ENCODE measurements at regions of chr14 and their contacts with region 1.

Region 1: DNA sequence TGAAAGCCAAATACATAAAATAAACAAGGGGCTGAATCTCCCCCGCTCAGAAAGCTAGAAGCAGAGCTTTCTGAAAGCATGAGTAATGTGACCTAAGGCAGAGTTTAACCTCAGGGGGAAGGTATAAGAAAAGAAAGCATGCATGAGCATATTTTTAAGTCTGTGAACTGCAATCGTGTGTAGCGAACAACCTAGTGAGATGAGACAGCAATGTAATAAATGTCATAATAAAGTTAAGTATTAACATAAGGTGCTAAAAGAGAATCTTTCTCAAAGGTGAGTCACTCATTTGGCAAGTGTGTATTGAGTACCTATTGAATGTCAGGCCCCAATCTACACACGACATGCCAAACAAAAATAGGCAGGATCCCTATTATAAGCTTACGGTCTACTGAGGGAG is 14.2 kb upstream of the WDR20 start:
- DNase-seq: peak; percentile 25 to 97
- H3K4me3 ChIP-seq: peak overlapping the region; percentile 14
- H3K27ac ChIP-seq: peak overlapping the region; percentile 72
- H3K4me1 ChIP-seq: peaks cover 36% of the 10 kb centered on the region
- H3K27me3 ChIP-seq: no peaks in the 10 kb centered on the region
- CTCF ChIP-seq: no peak

Region 2: DNA sequence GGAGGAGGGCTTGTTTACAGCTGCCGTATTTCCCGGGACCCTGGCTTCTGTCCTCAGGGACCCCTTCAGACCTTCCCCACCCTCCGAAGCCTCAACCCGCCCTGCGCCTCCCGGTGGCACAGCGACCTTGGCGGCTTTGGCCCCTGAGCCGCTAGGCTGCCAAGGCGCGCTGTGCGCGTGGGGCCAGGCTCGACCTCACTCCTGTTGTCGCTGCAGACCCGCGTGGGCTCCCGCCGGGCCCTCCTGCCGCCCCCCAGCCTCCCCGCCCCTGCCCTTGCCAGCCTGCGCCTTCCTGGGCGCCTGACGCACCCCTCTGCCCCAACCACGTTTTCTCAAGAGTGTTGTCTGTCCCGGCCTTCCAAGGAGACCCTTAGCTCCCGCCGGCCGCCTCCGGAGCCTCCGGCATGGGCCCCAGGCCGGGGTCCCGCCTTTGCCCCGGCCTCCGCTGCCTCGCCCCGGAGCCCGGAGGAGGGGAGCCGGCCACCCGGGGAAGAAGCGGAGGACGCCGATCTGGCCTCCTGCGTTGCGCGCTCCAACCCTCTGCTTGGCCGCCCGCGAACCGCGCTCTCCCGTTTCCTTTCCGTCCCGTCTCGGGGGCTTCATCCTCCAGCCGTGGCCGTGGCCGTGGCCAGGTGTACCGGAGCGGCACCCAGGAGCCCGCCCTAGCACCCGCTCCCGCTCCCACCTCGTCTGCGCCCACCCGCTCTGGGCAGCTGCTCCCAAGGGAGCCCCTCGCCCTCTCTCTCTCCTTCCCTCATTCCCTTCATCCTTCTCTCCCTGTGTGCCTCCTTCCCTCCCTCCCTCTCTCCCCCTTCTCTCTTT is 344.1 kb before region 1 on chr14:
- CTCF ChIA-PET with region 1: no interaction called
- POLR2A ChIA-PET with region 1: interaction called, 11 read pairs
- intact Hi-C with region 1: no loop called
- DNase-seq: no peak
- H3K4me3 ChIP-seq: no peak overlapping the region
- H3K27ac ChIP-seq: no peak overlapping the region
- H3K4me1 ChIP-seq: no peaks in the 10 kb centered on the region
- H3K27me3 ChIP-seq: no peaks in the 10 kb centered on the region
- CTCF ChIP-seq: no peak

Region 3: GRCh38 chr14:102105369-102105768 is 20.2 kb before region 1 on chr14:
- CTCF ChIA-PET with region 1: no interaction called
- POLR2A ChIA-PET with region 1: no interaction called
- intact Hi-C with region 1: no loop called
- DNase-seq: no peak
- H3K4me3 ChIP-seq: no peak overlapping the region
- H3K27ac ChIP-seq: no peak overlapping the region
- H3K4me1 ChIP-seq: no peaks in the 10 kb centered on the region
- H3K27me3 ChIP-seq: no peaks in the 10 kb centered on the region
- CTCF ChIP-seq: no peak

Region 4: GRCh38 chr14:102501751-102502315 is 376.3 kb after region 1 on chr14:
- CTCF ChIA-PET with region 1: interaction called, 13 read pairs
- POLR2A ChIA-PET with region 1: no interaction called
- intact Hi-C with region 1: no loop called
- DNase-seq: no peak
- H3K4me3 ChIP-seq: no peak overlapping the region
- H3K27ac ChIP-seq: no peak overlapping the region
- H3K4me1 ChIP-seq: no peaks in the 10 kb centered on the region
- H3K27me3 ChIP-seq: no peaks in the 10 kb centered on the region
- CTCF ChIP-seq: peak; percentile 49; the same call in 1 of the 2 replicates

Region 5: GRCh38 chr14:102928412-102929240 is 803.1 kb after region 1 on chr14:
- CTCF ChIA-PET with region 1: no interaction called
- POLR2A ChIA-PET with region 1: interaction called, 14 read pairs
- intact Hi-C with region 1: no loop called
- DNase-seq: peak; percentile 83 to 97
- H3K4me3 ChIP-seq: peak overlapping the region; percentile 87
- H3K27ac ChIP-seq: peak overlapping the region; percentile 74
- H3K4me1 ChIP-seq: peaks cover 20% of the 10 kb centered on the region
- H3K27me3 ChIP-seq: no peaks in the 10 kb centered on the region
- CTCF ChIP-seq: no peak

Measured in PC-9 (cell line).